CD4-positive, alpha-beta memory T cell (primary cell): ENCODE measurements at regions of chr9 and their contacts with region 1.

Region 1: DNA sequence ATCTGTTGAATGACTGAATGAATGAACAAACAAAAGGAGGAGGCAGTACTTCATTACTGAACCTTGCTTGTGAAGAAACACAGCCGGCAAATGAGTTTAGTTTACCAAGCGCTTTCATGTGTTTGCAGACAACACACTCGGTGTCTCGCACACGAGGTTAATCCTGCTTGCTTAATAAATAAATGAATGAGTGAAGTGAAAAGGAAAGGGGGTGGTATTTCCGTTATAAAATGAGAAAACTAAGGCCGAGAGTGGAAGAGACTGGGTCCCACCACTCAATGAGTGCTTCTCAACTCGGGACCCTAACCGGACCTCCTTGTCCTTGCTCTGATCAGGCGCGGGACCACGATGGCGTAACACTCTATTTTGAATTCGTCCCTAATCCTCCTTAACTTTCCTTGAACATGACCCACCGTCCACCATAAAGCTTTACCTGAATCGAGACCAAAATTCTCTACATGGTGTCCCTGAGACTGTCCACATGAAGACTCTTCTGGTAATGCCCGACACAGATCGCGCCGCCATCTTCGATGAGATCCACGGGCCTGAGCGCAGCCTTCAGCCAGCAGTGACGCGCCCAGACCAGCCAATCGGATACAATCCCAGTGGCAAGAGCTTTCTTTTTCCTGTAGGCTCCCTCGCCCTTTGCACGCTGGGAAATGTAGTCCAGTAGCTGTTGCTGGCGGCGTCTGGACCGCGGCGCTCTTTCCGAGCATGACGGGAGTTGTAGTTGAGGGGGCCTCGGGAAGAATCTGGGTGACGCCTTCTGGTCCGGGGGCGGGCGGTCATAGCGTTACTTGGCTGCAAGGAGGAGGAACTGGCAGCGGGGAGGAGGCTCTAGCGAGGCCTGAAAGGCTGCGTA is at the starts of genes MRPL50 and ZNF189:
- DNase-seq: peak; percentile 95 to 100 (median 97)
- H3K4me3 ChIP-seq: peak within 1 kb of the TSS; percentile 75 to 86
- H3K4me3 Mint-ChIP-seq: peak within 1 kb of the TSS; percentile 98 to 100 (median 99)
- H3K27ac ChIP-seq: peak within 1 kb of the TSS; percentile 93
- H3K27ac Mint-ChIP-seq: peak within 1 kb of the TSS; percentile 98 to 100 (median 99)
- H3K4me1 ChIP-seq: peaks cover 64% of the 10 kb centered on the region
- H3K4me1 Mint-ChIP-seq: peaks cover 61 to 87% (median 78%) of the 10 kb centered on the region in 4 donors
- H3K27me3 ChIP-seq: no peaks in the 10 kb centered on the region
- H3K27me3 Mint-ChIP-seq: no peaks in the 10 kb centered on the region
- total RNA-seq, gene MRPL50: 20.9 to 23.0 TPM
- total RNA-seq, gene ZNF189: 22.1 to 23.2 TPM

Region 2: DNA sequence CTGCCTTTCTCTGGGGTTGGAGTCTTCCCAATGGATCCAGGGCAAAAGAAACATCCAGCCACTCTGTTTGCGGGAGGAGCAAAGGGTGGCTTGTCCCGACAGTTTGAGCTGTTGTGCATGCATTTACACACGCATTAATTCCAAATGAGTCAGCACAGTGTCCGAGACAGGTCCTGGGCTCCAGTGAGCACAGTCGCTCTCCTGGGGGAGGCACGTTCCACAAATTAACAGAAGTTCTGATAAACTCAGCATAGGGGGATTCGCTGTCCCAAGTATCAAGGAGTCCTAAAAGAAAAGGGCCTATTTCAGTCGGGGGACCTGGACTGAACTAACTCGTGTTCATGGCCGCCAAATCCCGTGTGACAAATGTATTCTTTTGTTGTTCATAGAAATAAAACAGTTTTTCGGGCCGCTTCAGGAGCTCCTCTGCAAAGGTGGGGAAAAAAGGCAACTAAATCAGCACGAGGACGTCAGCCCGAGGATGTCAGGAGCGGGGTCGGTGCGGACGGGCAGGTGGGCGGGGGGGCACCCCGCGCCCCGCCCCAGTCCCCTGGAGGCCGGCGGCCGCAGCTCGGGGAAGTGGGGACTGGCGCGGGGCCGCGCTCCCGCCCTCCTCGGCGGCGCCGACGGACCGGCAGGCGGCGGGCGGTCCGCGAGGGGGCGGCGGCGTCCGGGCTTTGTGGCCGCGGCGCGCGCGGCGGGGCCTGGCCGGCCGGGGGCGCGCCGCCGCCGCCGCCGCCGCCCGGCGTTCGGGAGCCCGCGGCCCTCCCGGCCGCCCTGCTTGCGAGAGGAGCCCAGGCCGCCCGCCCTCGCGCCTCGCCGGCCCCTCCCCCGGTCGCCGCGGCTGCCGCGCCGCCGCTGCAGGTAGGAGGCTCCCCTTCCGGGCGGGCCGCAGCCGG is 971.5 kb before region 1 on chr9 and contains the start of gene MSANTD3:
- CTCF ChIA-PET with region 1: no interaction called
- POLR2A ChIA-PET with region 1: no interaction called
- intact Hi-C with region 1: loop called (anchors 1 kb)
- DNase-seq: peak; percentile 39 to 57 (median 48)
- H3K4me3 ChIP-seq: peak within 1 kb of the TSS; percentile 64 to 72
- H3K4me3 Mint-ChIP-seq: peak within 1 kb of the TSS; percentile 94 to 99 (median 96)
- H3K27ac ChIP-seq: peak within 1 kb of the TSS; percentile 40
- H3K27ac Mint-ChIP-seq: peak within 1 kb of the TSS; percentile 92 to 97 (median 95)
- H3K4me1 ChIP-seq: peaks cover 26% of the 10 kb centered on the region
- H3K4me1 Mint-ChIP-seq: peaks cover 27 to 50% (median 35%) of the 10 kb centered on the region in 4 donors
- H3K27me3 ChIP-seq: no peaks in the 10 kb centered on the region
- H3K27me3 Mint-ChIP-seq: peaks cover 1% of the 10 kb centered on the region in 2 donors
- total RNA-seq, gene MSANTD3: 14.4 to 14.8 TPM

Region 3: DNA sequence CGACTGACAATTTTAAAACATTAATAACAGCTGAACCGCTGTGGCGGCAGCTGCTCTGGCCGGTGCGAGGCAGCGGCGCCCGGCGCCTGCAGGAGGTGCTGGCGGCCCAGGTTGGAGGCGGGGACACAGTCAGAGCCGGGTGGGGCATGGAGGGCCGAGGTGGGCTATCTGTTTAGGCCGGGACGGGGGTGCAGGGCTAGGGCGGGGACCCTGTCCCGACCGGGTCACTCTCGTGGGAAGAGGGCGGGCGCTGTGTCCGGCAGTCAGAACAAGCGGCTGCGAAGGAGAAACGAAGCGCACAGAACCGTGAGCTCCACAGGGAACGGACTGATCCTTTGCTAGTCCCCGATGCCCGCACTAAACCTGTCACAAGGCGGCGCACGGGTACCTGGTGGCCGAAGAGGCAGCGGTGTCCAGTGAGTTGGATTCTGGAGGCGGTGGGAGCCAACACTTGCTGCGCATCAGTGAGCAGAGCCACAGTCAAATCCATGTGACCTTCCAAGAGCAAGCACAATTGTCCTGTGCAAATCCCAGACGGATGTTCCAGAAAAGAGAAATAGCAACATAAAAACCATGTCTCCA is 50.9 kb after region 1 on chr9:
- CTCF ChIA-PET with region 1: no interaction called
- POLR2A ChIA-PET with region 1: no interaction called
- intact Hi-C with region 1: no loop called
- DNase-seq: peak; percentile 23 to 38 (median 27)
- H3K4me3 ChIP-seq: no peak overlapping the region
- H3K4me3 Mint-ChIP-seq: peak overlapping the region; percentile 49 to 78 (median 65)
- H3K27ac ChIP-seq: no peak overlapping the region
- H3K27ac Mint-ChIP-seq: no peak overlapping the region
- H3K4me1 ChIP-seq: peaks cover 9% of the 10 kb centered on the region
- H3K4me1 Mint-ChIP-seq: peaks cover 0 to 9% (median 5%) of the 10 kb centered on the region in 4 donors
- H3K27me3 ChIP-seq: peaks cover 19% of the 10 kb centered on the region
- H3K27me3 Mint-ChIP-seq: peaks cover 37 to 47% of the 10 kb centered on the region in 2 donors